ENCODE measurements at regions of chr19 and their contacts with region 1.

Region 1: DNA sequence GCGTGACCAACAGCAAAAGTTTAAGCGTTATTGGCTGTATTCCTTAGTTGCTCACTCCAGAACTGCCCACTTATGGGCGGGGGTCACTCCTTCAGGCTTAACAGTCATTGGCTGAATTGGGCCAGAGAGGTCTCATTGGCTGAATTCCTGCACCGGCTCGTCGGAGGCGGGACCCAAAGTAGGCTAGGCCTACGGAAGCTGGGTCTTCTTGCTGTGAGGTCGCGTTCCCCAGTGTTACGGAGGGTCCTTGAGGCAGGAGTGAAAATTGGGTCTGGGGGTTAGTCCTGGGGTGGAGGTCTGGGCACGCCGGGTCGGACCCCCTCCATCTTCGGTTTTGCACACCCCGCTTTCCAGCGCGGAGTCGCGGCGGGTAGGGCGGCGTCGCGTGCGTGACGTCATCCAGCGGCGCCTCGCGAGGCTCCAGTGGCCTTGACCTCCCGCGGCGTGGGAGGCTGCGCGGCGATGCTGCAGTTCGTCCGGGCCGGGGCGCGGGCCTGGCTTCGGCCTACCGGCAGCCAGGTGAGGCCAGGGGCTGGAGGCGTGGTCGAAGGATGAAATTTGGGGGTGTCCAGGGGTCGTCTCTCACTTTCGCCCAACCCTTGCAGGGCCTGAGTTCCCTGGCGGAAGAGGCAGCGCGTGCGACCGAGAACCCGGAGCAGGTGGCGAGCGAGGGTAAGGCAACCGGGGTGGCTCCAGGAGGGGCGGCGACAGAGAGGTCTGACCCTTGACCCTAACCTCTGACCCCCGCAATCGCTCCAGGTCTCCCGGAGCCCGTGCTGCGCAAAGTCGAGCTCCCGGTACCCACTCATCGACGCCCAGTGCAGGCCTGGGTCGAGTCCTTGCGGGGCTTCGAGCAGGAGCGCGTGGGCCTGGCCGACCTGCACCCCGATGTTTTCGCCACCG is at the start of gene MRPL4:
- DNase-seq: peak; percentile 96
- ATAC-seq: peak; percentile 97
- H3K4me3 ChIP-seq: peak within 1 kb of the TSS; percentile 93
- H3K27ac ChIP-seq: peak within 1 kb of the TSS; percentile 96
- H3K4me1 ChIP-seq: peaks cover 17% of the 10 kb centered on the region
- H3K27me3 ChIP-seq: no peaks in the 10 kb centered on the region
- CTCF ChIP-seq: no peak
- EP300 ChIP-seq: no peak
- POLR2A ChIP-seq: peak; percentile 99
- RAD21 ChIP-seq: no peak
- polyA plus RNA-seq, gene MRPL4: 0.79 to 5.8 TPM

Region 2: DNA sequence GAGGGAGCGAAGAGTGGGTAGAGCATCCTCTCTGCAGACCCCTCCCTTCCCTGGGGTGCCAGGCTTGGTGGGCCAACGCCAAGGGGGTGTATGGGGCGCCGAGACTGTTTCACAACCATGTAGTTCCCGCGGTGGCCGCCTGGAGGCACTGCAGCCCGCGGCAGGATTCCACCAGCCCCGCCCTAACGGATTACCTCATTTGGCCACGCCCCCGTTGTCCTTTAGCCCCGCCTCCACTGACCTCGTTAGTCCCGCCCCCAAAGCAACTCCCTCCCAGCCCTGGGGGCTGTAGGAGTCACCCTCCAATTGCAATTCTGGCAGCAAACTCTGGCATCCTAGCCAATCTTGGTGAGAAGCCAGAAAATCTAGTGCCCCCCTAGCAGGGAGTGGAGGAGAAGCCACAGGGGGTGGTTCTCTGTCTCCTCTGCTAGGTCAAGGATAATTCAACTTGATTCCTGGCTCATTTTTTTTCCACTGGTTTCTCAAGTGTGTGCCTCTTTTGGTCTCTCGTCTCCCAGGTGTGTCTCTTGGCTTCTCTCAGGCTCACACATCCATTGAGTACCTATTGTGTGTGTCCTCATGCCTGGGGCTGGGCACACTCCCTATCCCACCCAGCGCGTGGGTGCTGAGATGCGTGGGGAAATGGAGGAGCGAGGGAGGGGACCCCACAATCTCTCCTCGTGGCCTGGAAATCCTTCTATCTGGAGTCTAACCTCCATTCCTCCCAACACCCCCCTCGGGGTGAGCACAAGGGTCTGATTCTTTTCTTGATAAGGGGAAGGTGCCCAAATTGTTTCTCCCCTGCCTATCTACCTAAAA is 317.7 kb before region 1 on chr19:
- CTCF ChIA-PET with region 1: interaction called, 34 read pairs
- POLR2A ChIA-PET with region 1: no interaction called
- RAD21 ChIA-PET with region 1: interaction called, 7 read pairs
- SMC1A ChIA-PET with region 1: interaction called, 13 read pairs
- in situ Hi-C with region 1: loop called (anchors 5 kb)
- intact Hi-C with region 1: loop called (anchors 1 kb)
- DNase-seq: no peak
- ATAC-seq: peak; percentile 85
- H3K4me3 ChIP-seq: no peak overlapping the region
- H3K27ac ChIP-seq: no peak overlapping the region
- H3K4me1 ChIP-seq: no peaks in the 10 kb centered on the region
- H3K27me3 ChIP-seq: no peaks in the 10 kb centered on the region
- CTCF ChIP-seq: peak; percentile 96 to 97 (median 97); a peak in 5 of 6 replicates
- EP300 ChIP-seq: peak in 1 of 2 experiments; percentile 12; a peak in 1 of 4 replicates
- POLR2A ChIP-seq: no peak
- RAD21 ChIP-seq: peak; percentile 82

Region 3: DNA sequence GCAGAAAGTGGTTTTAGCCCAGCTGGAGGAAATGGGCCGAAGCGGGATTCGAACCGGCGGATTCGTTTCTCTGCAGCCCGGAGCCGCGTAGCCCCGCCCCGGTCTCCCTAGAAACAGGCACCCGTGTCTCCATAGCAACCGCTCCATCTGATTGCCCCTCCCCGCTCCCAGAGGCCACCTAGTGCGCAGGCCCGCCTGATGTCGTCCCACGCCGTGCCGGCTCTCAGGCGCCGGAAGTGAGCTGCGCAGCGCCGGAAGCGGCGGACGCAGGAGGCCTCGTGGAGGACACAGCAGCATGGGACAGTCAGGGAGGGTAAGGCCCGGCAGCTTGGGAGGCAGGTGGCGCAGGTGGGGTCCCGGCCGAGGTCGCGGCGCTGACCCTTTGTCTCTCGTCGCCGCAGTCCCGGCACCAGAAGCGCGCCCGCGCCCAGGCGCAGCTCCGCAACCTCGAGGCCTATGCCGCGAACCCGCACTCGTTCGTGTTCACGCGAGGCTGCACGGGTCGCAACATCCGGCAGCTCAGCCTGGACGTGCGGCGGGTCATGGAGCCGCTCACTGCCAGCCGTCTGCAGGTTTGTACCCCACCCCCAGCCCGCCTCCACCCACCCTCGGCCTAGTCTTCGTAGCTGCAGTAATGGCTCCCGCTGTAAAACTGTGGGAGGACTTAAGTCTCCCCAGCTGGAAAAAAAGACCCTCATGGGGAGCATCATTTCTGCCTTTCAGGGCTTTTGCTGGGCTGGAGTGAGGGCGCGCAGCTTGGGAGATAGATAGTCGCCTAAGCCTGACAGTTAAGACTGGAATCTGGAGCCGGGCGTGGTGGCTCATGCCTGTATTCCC is 145.7 kb before region 1 on chr19 and contains the start of gene PPAN:
- CTCF ChIA-PET with region 1: interaction called, 39 read pairs
- POLR2A ChIA-PET with region 1: interaction called, 25 read pairs
- RAD21 ChIA-PET with region 1: interaction called, 12 read pairs
- SMC1A ChIA-PET with region 1: interaction called, 10 read pairs
- in situ Hi-C with region 1: no loop called
- intact Hi-C with region 1: no loop called
- DNase-seq: peak; percentile 93
- ATAC-seq: peak; percentile 61
- H3K4me3 ChIP-seq: peak within 1 kb of the TSS; percentile 79
- H3K27ac ChIP-seq: peak within 1 kb of the TSS; percentile 100
- H3K4me1 ChIP-seq: peaks cover 54% of the 10 kb centered on the region
- H3K27me3 ChIP-seq: no peaks in the 10 kb centered on the region
- CTCF ChIP-seq: no peak
- EP300 ChIP-seq: no peak
- POLR2A ChIP-seq: peak; percentile 95
- RAD21 ChIP-seq: no peak
- polyA plus RNA-seq, gene PPAN: 2.1 to 7.6 TPM

Region 4: DNA sequence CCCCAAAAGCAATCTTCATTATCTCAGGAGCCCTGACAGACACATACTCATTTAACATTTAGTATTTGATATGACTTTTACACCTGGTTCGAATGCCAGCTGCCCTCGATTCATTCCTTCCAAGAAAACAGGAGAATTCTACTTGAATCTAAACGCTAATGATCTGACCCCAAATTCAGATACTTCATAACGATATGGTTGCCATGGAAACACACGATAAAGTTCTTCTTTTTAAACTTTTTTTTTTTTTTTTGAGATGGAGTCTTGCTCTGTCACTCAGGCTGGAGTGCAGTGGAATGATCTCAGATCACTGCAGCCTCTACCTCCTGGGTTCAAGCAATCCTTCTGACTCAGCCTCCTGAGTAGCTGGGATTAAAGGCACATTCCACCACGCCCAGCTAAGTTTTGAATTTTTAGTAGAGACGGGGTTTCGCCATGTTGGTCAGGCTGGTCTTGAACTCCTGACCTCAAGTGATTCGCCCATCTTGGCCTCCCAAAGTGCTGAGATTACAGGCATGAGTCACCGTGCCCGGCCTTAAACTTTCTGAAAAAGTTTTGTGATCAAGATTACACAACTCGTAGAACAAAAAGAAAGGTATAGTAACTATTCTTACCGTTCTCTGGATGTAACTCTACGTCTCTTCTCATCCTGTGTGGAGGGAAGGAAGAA is 78.7 kb before region 1 on chr19:
- CTCF ChIA-PET with region 1: interaction called, 16 read pairs
- POLR2A ChIA-PET with region 1: interaction called, 3 read pairs
- RAD21 ChIA-PET with region 1: no interaction called
- SMC1A ChIA-PET with region 1: interaction called, 12 read pairs
- in situ Hi-C with region 1: no loop called
- intact Hi-C with region 1: no loop called
- DNase-seq: no peak
- ATAC-seq: no peak
- H3K4me3 ChIP-seq: no peak overlapping the region
- H3K27ac ChIP-seq: no peak overlapping the region
- H3K4me1 ChIP-seq: peaks cover 5% of the 10 kb centered on the region
- H3K27me3 ChIP-seq: no peaks in the 10 kb centered on the region
- CTCF ChIP-seq: no peak
- EP300 ChIP-seq: no peak
- POLR2A ChIP-seq: no peak
- RAD21 ChIP-seq: no peak

Region 5: GRCh38 chr19:10194500-10195289 is 57.3 kb before region 1 on chr19 and contains the start of gene DNMT1:
- CTCF ChIA-PET with region 1: interaction called, 19 read pairs
- POLR2A ChIA-PET with region 1: interaction called, 4 read pairs
- RAD21 ChIA-PET with region 1: interaction called, 18 read pairs
- SMC1A ChIA-PET with region 1: interaction called, 12 read pairs
- in situ Hi-C with region 1: no loop called
- intact Hi-C with region 1: loop called (anchors 2 kb)
- DNase-seq: peak; percentile 87
- ATAC-seq: peak; percentile 95
- H3K4me3 ChIP-seq: peak within 1 kb of the TSS; percentile 100
- H3K27ac ChIP-seq: peak within 1 kb of the TSS; percentile 91
- H3K4me1 ChIP-seq: peaks cover 23% of the 10 kb centered on the region
- H3K27me3 ChIP-seq: no peaks in the 10 kb centered on the region
- CTCF ChIP-seq: no peak
- EP300 ChIP-seq: peak in 1 of 2 experiments; percentile 61; a peak in 2 of 4 replicates
- POLR2A ChIP-seq: peak; percentile 98
- RAD21 ChIP-seq: no peak
- polyA plus RNA-seq, gene DNMT1: 128 to 149 TPM

Region 6: GRCh38 chr19:10230861-10231611 is 21.0 kb before region 1 on chr19 and contains the start of gene S1PR2:
- CTCF ChIA-PET with region 1: interaction called, 148 read pairs
- POLR2A ChIA-PET with region 1: interaction called, 35 read pairs
- RAD21 ChIA-PET with region 1: interaction called, 98 read pairs
- SMC1A ChIA-PET with region 1: interaction called, 78 read pairs
- in situ Hi-C with region 1: no loop called
- intact Hi-C with region 1: loop called (anchors 1 kb)
- DNase-seq: no peak
- ATAC-seq: peak; percentile 67
- H3K4me3 ChIP-seq: peak within 1 kb of the TSS; percentile 90
- H3K27ac ChIP-seq: peak within 1 kb of the TSS; percentile 97
- H3K4me1 ChIP-seq: peaks cover 44% of the 10 kb centered on the region
- H3K27me3 ChIP-seq: no peaks in the 10 kb centered on the region
- CTCF ChIP-seq: 0 out of 6 replicates have a peak, but pooled peaks of 1 of the 3 experiments have one; percentile 19
- EP300 ChIP-seq: no peak
- POLR2A ChIP-seq: peak; percentile 81
- RAD21 ChIP-seq: no peak
- polyA plus RNA-seq, gene S1PR2: 4.9 to 9.6 TPM

Region 7: DNA sequence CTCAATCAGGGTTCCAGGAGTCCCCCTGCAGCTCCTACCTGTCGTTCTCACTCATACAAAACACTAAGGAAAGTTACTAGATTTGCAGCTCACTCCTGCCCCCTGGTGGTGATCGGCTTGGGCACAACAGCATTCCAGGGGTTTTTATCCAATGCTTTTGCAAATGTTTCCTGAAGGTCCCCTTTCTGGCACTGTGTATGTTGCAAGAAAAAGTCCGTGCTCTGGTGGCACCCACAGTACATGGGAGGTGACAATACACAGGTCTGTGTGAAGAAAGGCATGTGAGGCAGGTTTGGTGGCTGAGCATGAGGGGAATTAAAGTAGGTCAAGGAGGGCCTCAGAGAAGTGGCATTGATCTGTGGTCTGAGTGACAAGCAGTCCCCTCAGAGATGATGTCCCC is 136.9 kb after region 1 on chr19:
- CTCF ChIA-PET with region 1: interaction called, 186 read pairs
- POLR2A ChIA-PET with region 1: interaction called, 3 read pairs
- RAD21 ChIA-PET with region 1: interaction called, 107 read pairs
- SMC1A ChIA-PET with region 1: interaction called, 83 read pairs
- in situ Hi-C with region 1: no loop called
- intact Hi-C with region 1: no loop called
- DNase-seq: peak; percentile 69
- ATAC-seq: peak; percentile 53
- H3K4me3 ChIP-seq: no peak overlapping the region
- H3K27ac ChIP-seq: no peak overlapping the region
- H3K4me1 ChIP-seq: peaks cover 10% of the 10 kb centered on the region
- H3K27me3 ChIP-seq: no peaks in the 10 kb centered on the region
- CTCF ChIP-seq: peak; percentile 88 to 95 (median 92)
- EP300 ChIP-seq: no peak
- POLR2A ChIP-seq: peak; percentile 46; the same call in 1 of the 2 replicates
- RAD21 ChIP-seq: peak; percentile 84